AG04449 (cell line): ENCODE measurements at regions of chr1 and their contacts with region 1.

Region 1: GRCh38 chr1:214660862-214661261 is 57.9 kb downstream of the CENPF start:
- DNase-seq: peak; percentile 70
- H3K4me3 ChIP-seq: no peak overlapping the region
- CTCF ChIP-seq: peak; percentile 85

Region 2: GRCh38 chr1:214648801-214649200 is 12.1 kb before region 1 on chr1:
- CTCF ChIA-PET with region 1: interaction called, 51 read pairs
- POLR2A ChIA-PET with region 1: no interaction called
- DNase-seq: no peak
- H3K4me3 ChIP-seq: no peak overlapping the region
- CTCF ChIP-seq: no peak

Region 3: DNA sequence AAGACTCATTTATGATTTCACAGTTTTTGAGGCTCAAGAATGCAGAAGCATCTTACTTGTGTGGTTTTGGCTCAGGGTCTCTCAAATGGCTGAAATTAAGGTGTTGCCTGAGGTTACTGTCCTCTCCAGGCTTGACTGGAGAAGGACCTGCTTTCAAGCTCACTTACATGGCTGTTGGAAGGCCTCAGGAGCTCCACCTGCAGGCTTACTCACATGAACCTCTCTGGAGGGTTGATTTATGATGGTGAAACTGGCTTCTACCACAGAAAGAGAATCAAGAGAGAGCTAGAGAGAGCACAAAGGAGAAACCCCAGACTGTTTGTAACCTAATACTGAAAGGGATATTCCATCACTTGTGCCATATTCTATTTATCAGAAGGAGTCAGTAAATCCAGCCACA is 415.5 kb after region 1 on chr1:
- CTCF ChIA-PET with region 1: interaction called, 10 read pairs
- POLR2A ChIA-PET with region 1: no interaction called
- DNase-seq: no peak
- H3K4me3 ChIP-seq: no peak overlapping the region
- CTCF ChIP-seq: peak; percentile 17

Region 4: GRCh38 chr1:215146341-215146826 is 485.5 kb after region 1 on chr1:
- CTCF ChIA-PET with region 1: interaction called, 69 read pairs
- POLR2A ChIA-PET with region 1: no interaction called
- DNase-seq: no peak
- H3K4me3 ChIP-seq: no peak overlapping the region
- CTCF ChIP-seq: peak; percentile 44

Region 5: DNA sequence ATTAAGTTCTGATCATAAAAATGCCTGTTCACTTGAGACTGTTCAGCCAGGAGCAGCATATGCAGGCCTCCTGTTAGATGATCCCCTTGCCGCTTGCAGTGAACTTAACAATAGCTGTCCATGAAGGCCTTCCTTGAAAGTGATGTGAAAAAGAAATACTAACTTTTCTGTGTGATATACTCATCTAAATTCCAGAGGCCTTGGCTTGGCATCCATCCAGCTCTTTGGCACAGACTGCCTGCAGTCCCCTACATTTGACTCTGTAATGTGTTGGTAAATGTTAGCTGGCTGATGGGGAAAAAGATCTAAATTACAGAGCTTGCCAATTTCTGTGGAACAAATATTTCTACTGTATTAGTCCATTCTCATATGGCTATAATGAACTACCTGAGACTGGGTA is 495.4 kb after region 1 on chr1:
- CTCF ChIA-PET with region 1: interaction called, 13 read pairs
- POLR2A ChIA-PET with region 1: no interaction called
- DNase-seq: no peak
- H3K4me3 ChIP-seq: no peak overlapping the region
- CTCF ChIP-seq: no peak

Region 6: GRCh38 chr1:215517441-215517891 is 856.6 kb after region 1 on chr1:
- CTCF ChIA-PET with region 1: interaction called, 24 read pairs
- POLR2A ChIA-PET with region 1: no interaction called
- DNase-seq: peak; percentile 37
- H3K4me3 ChIP-seq: no peak overlapping the region
- CTCF ChIP-seq: peak; percentile 69

Region 7: GRCh38 chr1:215526553-215527151 is 865.8 kb after region 1 on chr1:
- CTCF ChIA-PET with region 1: interaction called, 221 read pairs
- POLR2A ChIA-PET with region 1: no interaction called
- DNase-seq: no peak
- H3K4me3 ChIP-seq: no peak overlapping the region
- CTCF ChIP-seq: peak; percentile 27